ENCODE measurements at regions of chrX and their contacts with region 1.

Region 1: DNA sequence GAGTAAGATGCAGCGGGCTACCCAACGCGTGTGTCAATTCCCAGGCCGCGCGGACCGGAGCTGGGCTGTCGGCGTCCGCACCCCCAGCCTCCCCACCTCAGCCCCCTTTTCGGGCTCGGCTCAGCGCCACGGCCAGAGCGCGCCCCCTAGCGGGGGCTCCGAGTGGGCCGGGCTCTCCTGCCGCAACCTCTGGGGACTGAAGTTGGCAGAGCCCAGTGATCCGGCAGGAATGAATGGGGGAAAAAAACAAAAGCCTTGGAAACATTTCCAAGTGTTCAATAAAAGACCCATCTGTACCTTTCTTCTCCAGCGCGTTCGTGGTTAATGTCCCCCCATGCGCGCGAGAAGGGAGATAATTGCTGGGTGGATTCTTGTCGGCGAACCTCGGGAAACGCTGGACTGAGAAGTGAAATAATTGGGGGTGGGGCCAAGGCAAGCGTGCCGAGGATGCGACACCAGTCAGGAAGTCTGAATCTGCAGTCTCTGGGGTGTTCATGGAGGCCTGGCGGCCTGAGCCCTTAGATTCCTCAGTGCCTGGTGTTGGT is 5.2 kb upstream of the ARX start:
- DNase-seq: no peak
- ATAC-seq: peak; percentile 90
- H3K4me3 ChIP-seq: peak overlapping the region in 2 of 3 experiments; percentile 44 to 61; a peak in 3 of 6 replicates
- H3K27ac ChIP-seq: no peak overlapping the region
- H3K4me1 ChIP-seq: peaks cover 14% of the 10 kb centered on the region
- H3K27me3 ChIP-seq: peaks cover 2 to 49% of the 10 kb centered on the region in 2 experiments
- CTCF ChIP-seq: peak; percentile 76
- EP300 ChIP-seq: no peak
- POLR2A ChIP-seq: no peak
- RAD21 ChIP-seq: peak; percentile 63

Region 2: DNA sequence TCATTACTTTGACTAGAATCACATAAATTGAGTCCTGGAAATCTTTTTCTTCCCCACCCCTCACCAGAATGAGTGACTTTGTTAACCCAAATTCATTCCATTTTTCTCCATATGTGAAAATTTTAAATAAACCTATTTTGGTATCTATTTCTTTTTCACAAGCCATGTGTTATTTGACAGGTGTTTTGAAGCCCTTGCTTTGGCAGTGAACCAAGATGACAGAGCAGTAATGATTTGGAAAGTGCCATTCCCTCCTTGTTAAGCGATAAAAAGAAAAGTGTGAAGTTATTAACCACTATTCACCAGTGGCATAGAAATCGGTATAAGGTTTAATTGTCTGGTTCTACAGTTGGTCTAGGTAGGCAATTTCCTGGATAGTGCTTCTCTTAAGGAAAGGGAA is 261.2 kb before region 1 on chrX:
- CTCF ChIA-PET with region 1: no interaction called
- POLR2A ChIA-PET with region 1: no interaction called
- in situ Hi-C with region 1: loop called (anchors 5 kb)
- intact Hi-C with region 1: loop called (anchors 5 kb)
- DNase-seq: no peak
- ATAC-seq: no peak
- H3K4me3 ChIP-seq: no peak overlapping the region
- H3K27ac ChIP-seq: no peak overlapping the region
- H3K4me1 ChIP-seq: 0 out of 2 replicates have a peak, but pooled peaks cover 7% of the 10 kb centered on the region
- H3K27me3 ChIP-seq: no peaks in the 10 kb centered on the region
- CTCF ChIP-seq: no peak
- EP300 ChIP-seq: no peak
- POLR2A ChIP-seq: no peak
- RAD21 ChIP-seq: no peak

Region 3: DNA sequence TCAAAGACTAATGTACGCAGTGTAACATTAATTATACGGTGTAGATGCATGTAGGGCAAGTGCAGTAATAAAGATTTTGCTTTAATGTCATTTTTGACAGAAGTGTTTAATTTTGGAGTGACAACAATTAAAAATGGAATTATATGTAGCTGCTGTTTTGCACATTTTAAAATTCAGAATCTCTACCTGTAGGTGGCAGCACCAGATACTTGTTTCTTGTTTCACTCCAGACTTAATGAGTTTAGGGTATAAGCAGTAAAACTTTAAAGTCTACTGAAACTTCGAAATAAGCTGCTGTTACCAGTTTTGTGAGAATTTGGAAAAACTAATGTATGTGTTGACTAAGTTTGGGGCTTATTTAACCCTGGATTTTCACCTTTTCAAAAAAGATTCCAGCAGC is 182.3 kb before region 1 on chrX:
- CTCF ChIA-PET with region 1: interaction called, 3 read pairs
- POLR2A ChIA-PET with region 1: no interaction called
- in situ Hi-C with region 1: loop called (anchors 5 kb)
- intact Hi-C with region 1: loop called (anchors 2 kb)
- DNase-seq: no peak
- ATAC-seq: no peak
- H3K4me3 ChIP-seq: no peak overlapping the region
- H3K27ac ChIP-seq: no peak overlapping the region
- H3K4me1 ChIP-seq: no peaks in the 10 kb centered on the region
- H3K27me3 ChIP-seq: no peaks in the 10 kb centered on the region
- CTCF ChIP-seq: peak; percentile 37
- EP300 ChIP-seq: no peak
- POLR2A ChIP-seq: no peak
- RAD21 ChIP-seq: no peak